CD4-positive, alpha-beta T cell (primary cell): ENCODE measurements at regions of chr6 and their contacts with region 1.

Region 1: GRCh38 chr6:157823001-157823527 is at the start of gene SNX9:
- DNase-seq: peak in 13 of 14 experiments; percentile 38 to 88 (median 59)
- ATAC-seq: peak; percentile 46
- H3K4me3 ChIP-seq: peak within 1 kb of the TSS; percentile 78
- H3K4me3 Mint-ChIP-seq: peak within 1 kb of the TSS; percentile 96
- H3K27ac ChIP-seq: peak within 1 kb of the TSS; percentile 25 to 77
- H3K27ac Mint-ChIP-seq: peak within 1 kb of the TSS; percentile 98
- H3K4me1 ChIP-seq: peaks cover 17% of the 10 kb centered on the region
- H3K4me1 Mint-ChIP-seq: peaks cover 58% of the 10 kb centered on the region
- H3K27me3 ChIP-seq: no peaks in the 10 kb centered on the region
- H3K27me3 Mint-ChIP-seq: no peaks in the 10 kb centered on the region
- CTCF ChIP-seq: no peak
- total RNA-seq, gene SNX9: 46.6 to 48.5 TPM

Region 2: DNA sequence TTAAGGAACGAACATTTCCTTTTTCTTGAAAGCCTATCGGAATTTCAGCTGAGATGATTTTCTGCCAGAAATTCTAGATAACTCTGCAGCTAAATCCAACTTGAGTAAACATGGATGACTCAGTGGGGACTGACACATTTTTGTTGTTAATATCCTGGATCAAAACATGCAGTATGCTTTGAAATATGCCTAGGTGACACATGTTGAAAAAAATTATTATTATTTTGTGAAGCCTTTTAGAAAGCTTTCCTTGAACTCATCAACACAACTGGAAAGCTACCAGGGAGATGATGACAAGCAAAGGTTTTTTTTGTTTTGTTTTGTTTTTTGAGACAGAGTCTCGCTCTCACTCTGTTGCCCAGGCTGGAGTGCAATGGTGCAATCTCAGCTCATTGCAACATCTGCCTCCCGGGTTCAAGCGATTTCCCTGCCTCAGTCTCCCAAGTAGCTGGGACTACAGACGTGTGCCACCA is 140.1 kb before region 1 on chr6:
- CTCF ChIA-PET with region 1: no interaction called
- POLR2A ChIA-PET with region 1: no interaction called
- intact Hi-C with region 1: no loop called
- DNase-seq: no peak
- ATAC-seq: no peak
- H3K4me3 ChIP-seq: no peak overlapping the region
- H3K4me3 Mint-ChIP-seq: no peak overlapping the region
- H3K27ac ChIP-seq: no peak overlapping the region
- H3K27ac Mint-ChIP-seq: no peak overlapping the region
- H3K4me1 ChIP-seq: no peaks in the 10 kb centered on the region
- H3K4me1 Mint-ChIP-seq: no peaks in the 10 kb centered on the region
- H3K27me3 ChIP-seq: no peaks in the 10 kb centered on the region
- H3K27me3 Mint-ChIP-seq: no peaks in the 10 kb centered on the region
- CTCF ChIP-seq: no peak

Region 3: GRCh38 chr6:157699777-157700636 is 123.1 kb before region 1 on chr6:
- CTCF ChIA-PET with region 1: no interaction called
- POLR2A ChIA-PET with region 1: no interaction called
- intact Hi-C with region 1: no loop called
- DNase-seq: no peak
- ATAC-seq: no peak
- H3K4me3 ChIP-seq: no peak overlapping the region
- H3K4me3 Mint-ChIP-seq: no peak overlapping the region
- H3K27ac ChIP-seq: no peak overlapping the region
- H3K27ac Mint-ChIP-seq: no peak overlapping the region
- H3K4me1 ChIP-seq: no peaks in the 10 kb centered on the region
- H3K4me1 Mint-ChIP-seq: no peaks in the 10 kb centered on the region
- H3K27me3 ChIP-seq: no peaks in the 10 kb centered on the region
- H3K27me3 Mint-ChIP-seq: no peaks in the 10 kb centered on the region
- CTCF ChIP-seq: no peak

Region 4: DNA sequence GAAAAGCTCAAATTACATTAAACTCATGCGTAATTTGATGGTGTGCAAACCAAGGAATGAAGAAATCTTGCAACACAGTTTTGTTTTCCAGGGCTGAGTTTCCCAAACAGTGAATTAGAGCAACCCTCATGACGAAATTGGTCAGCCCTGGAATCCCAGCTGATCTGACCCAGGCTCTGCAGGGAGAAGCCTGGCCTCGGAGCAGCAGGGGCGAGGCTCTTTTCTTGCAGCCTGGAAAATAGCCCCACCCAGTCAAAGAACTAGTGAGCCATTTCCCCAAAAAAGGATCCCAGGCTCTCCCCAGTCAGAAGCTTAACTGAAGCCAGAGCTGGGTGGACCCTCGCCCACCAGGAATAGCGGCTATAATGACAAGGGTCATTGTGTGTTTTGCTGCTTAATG is 107.3 kb before region 1 on chr6:
- CTCF ChIA-PET with region 1: no interaction called
- POLR2A ChIA-PET with region 1: no interaction called
- intact Hi-C with region 1: no loop called
- DNase-seq: no peak
- ATAC-seq: no peak
- H3K4me3 ChIP-seq: no peak overlapping the region
- H3K4me3 Mint-ChIP-seq: no peak overlapping the region
- H3K27ac ChIP-seq: no peak overlapping the region
- H3K27ac Mint-ChIP-seq: no peak overlapping the region
- H3K4me1 ChIP-seq: no peaks in the 10 kb centered on the region
- H3K4me1 Mint-ChIP-seq: no peaks in the 10 kb centered on the region
- H3K27me3 ChIP-seq: no peaks in the 10 kb centered on the region
- H3K27me3 Mint-ChIP-seq: no peaks in the 10 kb centered on the region
- CTCF ChIP-seq: no peak

Region 5: DNA sequence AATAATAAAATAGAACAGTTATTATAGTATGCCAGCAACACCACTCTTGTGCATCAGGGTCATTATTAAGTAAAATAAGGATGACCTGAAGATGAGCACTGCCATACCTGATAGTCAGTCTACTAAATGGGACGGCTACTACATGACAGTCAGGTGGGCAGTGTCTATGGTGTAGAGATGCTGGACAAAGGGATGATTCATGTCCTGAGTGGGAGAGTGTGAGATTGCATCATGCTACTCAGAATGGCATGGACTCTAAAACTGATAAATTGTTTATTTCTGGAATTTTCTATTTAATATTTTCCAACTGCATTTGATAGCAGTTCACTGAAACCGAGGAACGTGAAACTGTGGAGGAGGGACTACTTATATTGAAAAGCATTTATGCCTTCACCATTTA is 38.8 kb after region 1 on chr6:
- CTCF ChIA-PET with region 1: no interaction called
- POLR2A ChIA-PET with region 1: no interaction called
- intact Hi-C with region 1: loop called in 1 of 2 experiments (anchors 5 kb)
- DNase-seq: no peak
- ATAC-seq: no peak
- H3K4me3 ChIP-seq: no peak overlapping the region
- H3K4me3 Mint-ChIP-seq: no peak overlapping the region
- H3K27ac ChIP-seq: no peak overlapping the region
- H3K27ac Mint-ChIP-seq: no peak overlapping the region
- H3K4me1 ChIP-seq: peaks cover 21% of the 10 kb centered on the region
- H3K4me1 Mint-ChIP-seq: peaks cover 88% of the 10 kb centered on the region
- H3K27me3 ChIP-seq: no peaks in the 10 kb centered on the region
- H3K27me3 Mint-ChIP-seq: no peaks in the 10 kb centered on the region
- CTCF ChIP-seq: no peak

Region 6: GRCh38 chr6:157873735-157874344 is 50.8 kb after region 1 on chr6:
- CTCF ChIA-PET with region 1: interaction called, 5 read pairs
- POLR2A ChIA-PET with region 1: no interaction called
- intact Hi-C with region 1: loop called in 1 of 2 experiments (anchors 1 kb)
- DNase-seq: peak; percentile 75 to 92 (median 84)
- ATAC-seq: peak; percentile 74
- H3K4me3 ChIP-seq: no peak overlapping the region
- H3K4me3 Mint-ChIP-seq: no peak overlapping the region
- H3K27ac ChIP-seq: no peak overlapping the region
- H3K27ac Mint-ChIP-seq: peak overlapping the region; percentile 47
- H3K4me1 ChIP-seq: peaks cover 15% of the 10 kb centered on the region
- H3K4me1 Mint-ChIP-seq: peaks cover 39% of the 10 kb centered on the region
- H3K27me3 ChIP-seq: no peaks in the 10 kb centered on the region
- H3K27me3 Mint-ChIP-seq: no peaks in the 10 kb centered on the region
- CTCF ChIP-seq: peak; percentile 92

Region 7: GRCh38 chr6:158170656-158171081 is 347.6 kb after region 1 on chr6:
- CTCF ChIA-PET with region 1: no interaction called
- POLR2A ChIA-PET with region 1: no interaction called
- intact Hi-C with region 1: loop called in 1 of 2 experiments (anchors 5 kb)
- DNase-seq: no peak
- ATAC-seq: no peak
- H3K4me3 ChIP-seq: no peak overlapping the region
- H3K4me3 Mint-ChIP-seq: no peak overlapping the region
- H3K27ac ChIP-seq: no peak overlapping the region
- H3K27ac Mint-ChIP-seq: no peak overlapping the region
- H3K4me1 ChIP-seq: peaks cover 14% of the 10 kb centered on the region
- H3K4me1 Mint-ChIP-seq: peaks cover 42% of the 10 kb centered on the region
- H3K27me3 ChIP-seq: no peaks in the 10 kb centered on the region
- H3K27me3 Mint-ChIP-seq: no peaks in the 10 kb centered on the region
- CTCF ChIP-seq: no peak